CD4-positive, alpha-beta T cell (primary cell): ENCODE measurements at regions of chr17 and their contacts with region 1.

Region 1: DNA sequence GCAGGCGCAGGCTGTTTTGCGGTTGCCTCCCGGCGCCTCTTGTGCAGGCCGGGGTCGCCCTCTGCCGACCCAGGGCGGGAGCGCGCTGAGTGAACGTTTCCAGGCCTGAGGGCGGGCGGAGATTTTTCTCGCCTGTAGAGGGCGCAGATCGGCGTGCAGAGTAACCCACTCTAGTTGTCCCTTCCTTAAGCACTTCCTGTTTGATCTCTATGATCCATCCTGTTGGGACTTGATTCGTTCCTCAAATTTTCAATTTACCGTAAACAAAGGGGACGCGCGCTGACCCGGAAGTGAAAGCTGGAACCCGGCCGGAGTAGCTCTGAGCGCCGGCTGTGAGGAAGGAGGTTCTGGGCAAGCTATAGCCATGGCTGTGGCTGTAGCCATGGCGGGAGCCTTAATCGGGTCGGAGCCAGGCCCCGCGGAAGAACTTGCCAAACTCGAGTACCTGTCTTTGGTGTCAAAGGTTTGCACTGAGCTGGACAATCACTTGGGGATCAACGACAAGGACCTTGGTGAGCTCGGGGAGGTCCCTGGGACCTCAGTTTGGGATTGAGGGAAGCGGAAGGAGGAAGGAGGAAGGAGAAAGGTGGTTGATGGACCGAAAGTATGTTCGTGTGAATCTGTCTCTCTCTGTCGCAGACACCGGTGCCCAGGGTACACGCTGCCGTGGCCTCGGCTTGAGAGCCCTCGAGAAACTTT is at the start of gene DHX8:
- DNase-seq: peak; percentile 95 to 99 (median 99)
- ATAC-seq: peak; percentile 97
- H3K4me3 ChIP-seq: peak within 1 kb of the TSS; percentile 88
- H3K4me3 Mint-ChIP-seq: peak within 1 kb of the TSS; percentile 99
- H3K27ac ChIP-seq: peak within 1 kb of the TSS; percentile 37 to 70
- H3K27ac Mint-ChIP-seq: peak within 1 kb of the TSS; percentile 96
- H3K4me1 ChIP-seq: peaks cover 29% of the 10 kb centered on the region
- H3K4me1 Mint-ChIP-seq: peaks cover 36% of the 10 kb centered on the region
- H3K27me3 ChIP-seq: no peaks in the 10 kb centered on the region
- H3K27me3 Mint-ChIP-seq: no peaks in the 10 kb centered on the region
- CTCF ChIP-seq: peak; percentile 100
- total RNA-seq, gene DHX8: 88.8 to 106 TPM

Region 2: GRCh38 chr17:42153919-42154742 is 1329.7 kb before region 1 on chr17:
- CTCF ChIA-PET with region 1: no interaction called
- POLR2A ChIA-PET with region 1: no interaction called
- intact Hi-C with region 1: loop called in 1 of 2 experiments (anchors 10 kb)
- DNase-seq: peak in 3 of 14 experiments; percentile 4 to 48 (median 44)
- ATAC-seq: no peak
- H3K4me3 ChIP-seq: peak overlapping the region; percentile 84
- H3K4me3 Mint-ChIP-seq: peak overlapping the region; percentile 99
- H3K27ac ChIP-seq: peak overlapping the region; percentile 72 to 79
- H3K27ac Mint-ChIP-seq: peak overlapping the region; percentile 88
- H3K4me1 ChIP-seq: peaks cover 48% of the 10 kb centered on the region
- H3K4me1 Mint-ChIP-seq: peaks cover 32% of the 10 kb centered on the region
- H3K27me3 ChIP-seq: no peaks in the 10 kb centered on the region
- H3K27me3 Mint-ChIP-seq: no peaks in the 10 kb centered on the region
- CTCF ChIP-seq: no peak

Region 3: GRCh38 chr17:43024407-43025289 is 459.2 kb before region 1 on chr17 and contains the start of gene RND2:
- CTCF ChIA-PET with region 1: interaction called, 6 read pairs
- POLR2A ChIA-PET with region 1: interaction called, 3 read pairs
- intact Hi-C with region 1: loop called in 1 of 2 experiments (anchors 1 kb)
- DNase-seq: peak; percentile 60 to 91 (median 71)
- ATAC-seq: peak; percentile 56
- H3K4me3 ChIP-seq: peak within 1 kb of the TSS; percentile 74
- H3K4me3 Mint-ChIP-seq: peak within 1 kb of the TSS; percentile 90
- H3K27ac ChIP-seq: peak within 1 kb of the TSS in 1 of 2 donors; percentile 56
- H3K27ac Mint-ChIP-seq: peak within 1 kb of the TSS; percentile 77
- H3K4me1 ChIP-seq: peaks cover 48% of the 10 kb centered on the region
- H3K4me1 Mint-ChIP-seq: peaks cover 28% of the 10 kb centered on the region
- H3K27me3 ChIP-seq: no peaks in the 10 kb centered on the region
- H3K27me3 Mint-ChIP-seq: no peaks in the 10 kb centered on the region
- CTCF ChIP-seq: peak; percentile 21
- total RNA-seq, gene RND2: 0.27 to 0.28 TPM

Region 4: GRCh38 chr17:43170766-43171585 is 312.8 kb before region 1 on chr17 and contains the start of gene NBR1:
- CTCF ChIA-PET with region 1: interaction called, 3 read pairs
- POLR2A ChIA-PET with region 1: interaction called, 7 read pairs
- intact Hi-C with region 1: loop called (anchors 2 to 5 kb)
- DNase-seq: peak; percentile 90 to 99 (median 92)
- ATAC-seq: peak; percentile 76
- H3K4me3 ChIP-seq: peak within 1 kb of the TSS; percentile 71
- H3K4me3 Mint-ChIP-seq: no peak within 1 kb of the TSS
- H3K27ac ChIP-seq: peak within 1 kb of the TSS; percentile 98
- H3K27ac Mint-ChIP-seq: no peak within 1 kb of the TSS
- H3K4me1 ChIP-seq: peaks cover 47% of the 10 kb centered on the region
- H3K4me1 Mint-ChIP-seq: peaks cover 27% of the 10 kb centered on the region
- H3K27me3 ChIP-seq: no peaks in the 10 kb centered on the region
- H3K27me3 Mint-ChIP-seq: no peaks in the 10 kb centered on the region
- CTCF ChIP-seq: no peak
- total RNA-seq, gene NBR1: 23.7 TPM

Region 5: DNA sequence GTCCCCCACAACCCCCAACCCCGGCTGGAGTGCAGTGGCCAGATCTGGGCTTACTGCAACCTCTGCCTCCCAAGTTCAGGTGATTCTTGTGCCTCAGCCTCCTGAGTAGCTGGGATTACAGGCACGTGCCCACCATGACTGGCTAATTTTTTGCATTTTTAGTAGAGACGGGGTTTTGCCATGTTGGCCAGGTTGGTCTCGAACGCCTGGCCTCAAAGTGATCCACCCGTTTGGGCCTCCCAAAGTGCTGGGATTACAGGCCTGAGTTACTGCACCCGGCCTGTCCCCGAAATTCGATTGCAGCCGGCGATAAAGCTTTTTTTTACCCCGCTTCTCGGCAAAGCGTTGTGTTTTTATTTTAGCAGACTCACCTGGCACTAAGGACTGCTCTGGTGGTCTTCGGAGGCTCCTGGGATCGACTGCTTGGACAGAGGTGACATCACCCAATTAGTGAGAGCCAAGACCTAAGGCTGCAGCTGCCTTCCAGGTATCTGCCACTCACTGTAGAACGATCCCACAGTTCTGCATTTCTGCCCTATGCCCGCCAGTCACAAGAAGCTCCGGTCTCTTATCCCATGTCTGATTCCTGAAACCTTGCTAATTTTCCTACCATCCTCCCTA is 167.2 kb before region 1 on chr17:
- CTCF ChIA-PET with region 1: interaction called, 7 read pairs
- POLR2A ChIA-PET with region 1: interaction called, 11 read pairs
- intact Hi-C with region 1: no loop called
- DNase-seq: peak in 3 of 14 experiments; percentile 23 to 66 (median 42)
- ATAC-seq: no peak
- H3K4me3 ChIP-seq: no peak overlapping the region
- H3K4me3 Mint-ChIP-seq: peak overlapping the region; percentile 20
- H3K27ac ChIP-seq: no peak overlapping the region
- H3K27ac Mint-ChIP-seq: no peak overlapping the region
- H3K4me1 ChIP-seq: no peaks in the 10 kb centered on the region
- H3K4me1 Mint-ChIP-seq: peaks cover 4% of the 10 kb centered on the region
- H3K27me3 ChIP-seq: no peaks in the 10 kb centered on the region
- H3K27me3 Mint-ChIP-seq: no peaks in the 10 kb centered on the region
- CTCF ChIP-seq: no peak

Region 6: GRCh38 chr17:43367737-43368242 is 116.0 kb before region 1 on chr17:
- CTCF ChIA-PET with region 1: interaction called, 25 read pairs
- POLR2A ChIA-PET with region 1: interaction called, 80 read pairs
- intact Hi-C with region 1: no loop called
- DNase-seq: peak in 2 of 14 experiments; percentile 70 to 88
- ATAC-seq: peak; percentile 47
- H3K4me3 ChIP-seq: peak overlapping the region; percentile 83
- H3K4me3 Mint-ChIP-seq: peak overlapping the region; percentile 95
- H3K27ac ChIP-seq: peak overlapping the region; percentile 86 to 97
- H3K27ac Mint-ChIP-seq: peak overlapping the region; percentile 98
- H3K4me1 ChIP-seq: peaks cover 38% of the 10 kb centered on the region
- H3K4me1 Mint-ChIP-seq: peaks cover 48% of the 10 kb centered on the region
- H3K27me3 ChIP-seq: no peaks in the 10 kb centered on the region
- H3K27me3 Mint-ChIP-seq: no peaks in the 10 kb centered on the region
- CTCF ChIP-seq: no peak

Region 7: GRCh38 chr17:43393944-43394482 is 89.8 kb before region 1 on chr17:
- CTCF ChIA-PET with region 1: interaction called, 73 read pairs
- POLR2A ChIA-PET with region 1: interaction called, 38 read pairs
- intact Hi-C with region 1: loop called (anchors 1 kb)
- DNase-seq: peak; percentile 77 to 94 (median 89)
- ATAC-seq: peak; percentile 27
- H3K4me3 ChIP-seq: no peak overlapping the region
- H3K4me3 Mint-ChIP-seq: peak overlapping the region; percentile 49
- H3K27ac ChIP-seq: peak overlapping the region in 1 of 2 donors; percentile 14
- H3K27ac Mint-ChIP-seq: peak overlapping the region; percentile 16
- H3K4me1 ChIP-seq: peaks cover 40% of the 10 kb centered on the region
- H3K4me1 Mint-ChIP-seq: peaks cover 37% of the 10 kb centered on the region
- H3K27me3 ChIP-seq: no peaks in the 10 kb centered on the region
- H3K27me3 Mint-ChIP-seq: no peaks in the 10 kb centered on the region
- CTCF ChIP-seq: peak; percentile 90

Region 8: DNA sequence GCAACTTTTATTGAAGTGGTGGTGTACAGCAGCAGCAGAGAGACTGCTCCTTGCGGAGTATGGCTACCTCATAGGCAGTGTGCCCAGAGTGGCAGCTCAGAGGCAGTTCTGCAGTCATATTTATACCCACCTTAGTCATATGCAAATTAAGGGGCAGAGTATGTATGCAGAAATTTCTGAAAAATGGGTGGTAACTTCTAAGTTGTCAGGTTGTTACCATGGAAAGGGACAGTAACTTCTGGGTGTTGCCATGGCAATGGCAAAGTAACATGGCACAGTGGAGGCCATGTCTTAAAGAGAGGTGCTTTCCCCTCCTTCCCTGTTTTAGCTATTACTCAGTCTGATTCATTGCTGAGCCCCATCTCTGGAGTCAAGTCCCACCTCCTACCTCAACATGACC is 124.5 kb after region 1 on chr17:
- CTCF ChIA-PET with region 1: no interaction called
- POLR2A ChIA-PET with region 1: no interaction called
- intact Hi-C with region 1: no loop called
- DNase-seq: peak in 2 of 14 experiments; percentile 37 to 58
- ATAC-seq: peak; percentile 32
- H3K4me3 ChIP-seq: no peak overlapping the region
- H3K4me3 Mint-ChIP-seq: no peak overlapping the region
- H3K27ac ChIP-seq: no peak overlapping the region
- H3K27ac Mint-ChIP-seq: no peak overlapping the region
- H3K4me1 ChIP-seq: no peaks in the 10 kb centered on the region
- H3K4me1 Mint-ChIP-seq: no peaks in the 10 kb centered on the region
- H3K27me3 ChIP-seq: no peaks in the 10 kb centered on the region
- H3K27me3 Mint-ChIP-seq: peaks cover 4% of the 10 kb centered on the region
- CTCF ChIP-seq: no peak